K562 (cell line): ENCODE measurements at regions of chr12 and their contacts with region 1.

Region 1: GRCh38 chr12:56266693-56267442 is at the start of gene COQ10A:
- DNase-seq: peak; percentile 92 to 95 (median 93)
- ATAC-seq: peak; percentile 93
- H3K4me3 ChIP-seq: peak within 1 kb of the TSS; percentile 67
- H3K27ac ChIP-seq: peak within 1 kb of the TSS; percentile 77
- H3K4me1 ChIP-seq: peaks cover 11 to 19% of the 10 kb centered on the region in 2 experiments; a peak in 4 of 5 replicates
- H3K27me3 ChIP-seq: no peaks in the 10 kb centered on the region
- CTCF ChIP-seq: peak; percentile 64 to 79 (median 64)
- EP300 ChIP-seq: no peak
- POLR2A ChIP-seq: peak; percentile 90
- RAD21 ChIP-seq: peak; percentile 11 to 48; a peak in 3 of 4 replicates
- polyA plus RNA-seq, gene COQ10A: 3.1 to 5.7 TPM

Region 2: GRCh38 chr12:55830601-55831446 is 436.0 kb before region 1 on chr12:
- CTCF ChIA-PET with region 1: no interaction called
- POLR2A ChIA-PET with region 1: no interaction called
- in situ Hi-C with region 1: no loop called
- intact Hi-C with region 1: no loop called
- DNase-seq: peak; percentile 74 to 81 (median 78)
- ATAC-seq: peak; percentile 51
- H3K4me3 ChIP-seq: peak overlapping the region; percentile 78
- H3K27ac ChIP-seq: peak overlapping the region; percentile 83
- H3K4me1 ChIP-seq: peaks cover 26 to 42% of the 10 kb centered on the region in 2 experiments; a peak in 4 of 5 replicates
- H3K27me3 ChIP-seq: no peaks in the 10 kb centered on the region
- CTCF ChIP-seq: no peak
- EP300 ChIP-seq: no peak
- POLR2A ChIP-seq: 0 out of 2 replicates have a peak, but pooled peaks have one; percentile 28
- RAD21 ChIP-seq: no peak

Region 3: GRCh38 chr12:56224102-56224701 is 42.7 kb before region 1 on chr12 and contains the start of gene NABP2:
- CTCF ChIA-PET with region 1: no interaction called
- POLR2A ChIA-PET with region 1: interaction called, 7 read pairs
- in situ Hi-C with region 1: no loop called
- intact Hi-C with region 1: loop called (anchors 2 kb)
- DNase-seq: peak; percentile 98 to 100 (median 99)
- ATAC-seq: peak; percentile 91
- H3K4me3 ChIP-seq: peak within 1 kb of the TSS; percentile 95
- H3K27ac ChIP-seq: peak within 1 kb of the TSS; percentile 93
- H3K4me1 ChIP-seq: peaks cover 26 to 31% of the 10 kb centered on the region in 2 experiments; a peak in 4 of 5 replicates
- H3K27me3 ChIP-seq: no peaks in the 10 kb centered on the region
- CTCF ChIP-seq: peak; percentile 81 to 96 (median 81)
- EP300 ChIP-seq: 0 out of 2 replicates have a peak, but pooled peaks have one; percentile 29
- POLR2A ChIP-seq: 0 out of 2 replicates have a peak, but pooled peaks have one; percentile 51
- RAD21 ChIP-seq: peak; percentile 77
- polyA plus RNA-seq, gene NABP2: 11.3 to 28.0 TPM

Region 4: GRCh38 chr12:56278905-56279304 is 12.0 kb after region 1 on chr12:
- CTCF ChIA-PET with region 1: no interaction called
- POLR2A ChIA-PET with region 1: interaction called, 25 read pairs
- in situ Hi-C with region 1: no loop called
- intact Hi-C with region 1: no loop called
- DNase-seq: no peak
- ATAC-seq: no peak
- H3K4me3 ChIP-seq: no peak overlapping the region
- H3K27ac ChIP-seq: no peak overlapping the region
- H3K4me1 ChIP-seq: no peaks in the 10 kb centered on the region
- H3K27me3 ChIP-seq: no peaks in the 10 kb centered on the region
- CTCF ChIP-seq: no peak
- EP300 ChIP-seq: no peak
- POLR2A ChIP-seq: no peak
- RAD21 ChIP-seq: no peak

Region 5: DNA sequence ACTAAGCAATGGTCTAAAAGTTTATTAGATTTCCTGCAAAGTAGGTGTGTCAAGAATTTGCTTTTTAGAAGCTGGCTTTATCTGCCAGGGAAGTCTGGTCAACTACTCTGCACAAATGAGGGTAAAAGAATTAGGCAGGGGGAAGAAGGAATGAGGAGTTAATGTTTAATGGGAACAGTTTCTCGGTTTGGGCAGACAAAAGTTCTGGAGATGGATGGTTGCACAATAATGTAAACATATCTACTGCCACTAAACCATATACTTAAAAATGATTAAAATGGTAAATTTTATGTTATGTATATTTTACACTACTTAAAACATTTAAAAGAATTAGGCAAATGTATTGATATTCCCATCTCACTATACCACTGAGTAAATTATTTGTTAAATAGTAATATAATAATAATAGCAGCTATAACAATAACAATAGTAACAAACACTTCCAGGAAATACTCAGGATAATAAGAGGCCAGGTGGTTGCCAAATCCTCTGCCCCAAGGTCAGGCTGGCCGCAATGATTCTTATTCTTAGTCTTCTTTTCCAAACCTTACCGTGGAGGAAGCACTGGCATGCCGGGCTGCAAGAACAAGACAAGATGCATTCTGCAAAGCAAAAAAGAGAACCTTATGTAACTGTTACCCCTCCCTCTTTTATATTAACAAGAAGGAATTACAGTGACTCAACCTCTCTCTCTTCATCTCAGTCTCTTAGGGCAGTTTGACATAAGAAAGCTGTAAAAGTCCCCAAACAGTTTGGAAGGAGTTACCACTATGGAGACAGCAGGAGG is 19.4 kb after region 1 on chr12:
- CTCF ChIA-PET with region 1: no interaction called
- POLR2A ChIA-PET with region 1: interaction called, 13 read pairs
- in situ Hi-C with region 1: no loop called
- intact Hi-C with region 1: no loop called
- DNase-seq: no peak
- ATAC-seq: no peak
- H3K4me3 ChIP-seq: no peak overlapping the region
- H3K27ac ChIP-seq: no peak overlapping the region
- H3K4me1 ChIP-seq: no peaks in the 10 kb centered on the region
- H3K27me3 ChIP-seq: no peaks in the 10 kb centered on the region
- CTCF ChIP-seq: no peak
- EP300 ChIP-seq: no peak
- POLR2A ChIP-seq: no peak
- RAD21 ChIP-seq: no peak

Region 6: DNA sequence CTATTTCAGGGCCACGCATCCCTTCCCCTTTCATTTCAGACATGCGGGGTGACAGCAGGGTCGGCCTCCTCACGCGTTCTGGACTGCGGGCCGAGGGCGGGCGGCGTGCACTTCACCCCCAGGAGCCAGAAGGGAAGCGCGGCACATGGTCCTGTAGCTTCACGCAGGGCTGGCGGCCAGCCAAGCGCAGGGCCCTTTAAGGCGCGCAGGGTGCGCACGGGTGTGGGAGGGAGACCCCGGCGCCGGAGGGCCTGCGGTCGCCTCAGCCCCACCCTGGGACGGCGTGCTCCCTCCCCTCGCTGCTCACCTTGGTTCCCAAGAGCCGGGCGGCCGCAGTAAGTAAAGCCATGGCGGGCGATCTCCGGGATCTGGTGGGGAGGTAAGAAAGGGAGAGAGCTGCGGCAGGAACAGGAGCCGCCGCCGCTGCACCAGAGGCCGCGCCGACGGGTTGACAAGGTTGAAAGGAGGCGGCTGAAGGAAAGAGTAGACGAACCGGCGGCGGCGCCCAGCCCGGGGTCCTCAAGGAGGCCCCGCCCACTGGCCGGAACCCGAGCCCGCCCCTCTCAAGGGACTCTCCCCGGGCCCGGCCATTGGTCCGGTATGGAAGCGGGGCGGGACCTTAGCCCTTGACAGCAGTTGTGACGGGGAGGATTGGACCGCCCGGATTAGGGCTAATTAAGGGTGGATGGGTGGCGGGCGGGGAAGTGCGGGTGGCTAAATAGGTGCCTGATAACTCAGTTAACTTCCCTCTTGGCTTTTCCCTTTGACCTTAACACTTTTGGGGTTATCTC is 33.2 kb after region 1 on chr12 and contains the start of gene CS:
- CTCF ChIA-PET with region 1: no interaction called
- POLR2A ChIA-PET with region 1: interaction called, 3 read pairs
- in situ Hi-C with region 1: no loop called
- intact Hi-C with region 1: loop called (anchors 2 kb)
- DNase-seq: peak; percentile 96 to 99 (median 97)
- ATAC-seq: peak; percentile 94
- H3K4me3 ChIP-seq: peak within 1 kb of the TSS; percentile 64
- H3K27ac ChIP-seq: peak within 1 kb of the TSS; percentile 98
- H3K4me1 ChIP-seq: peaks cover 22 to 42% of the 10 kb centered on the region in 2 experiments
- H3K27me3 ChIP-seq: no peaks in the 10 kb centered on the region
- CTCF ChIP-seq: no peak
- EP300 ChIP-seq: peak; percentile 16; the same call in 1 of the 2 replicates
- POLR2A ChIP-seq: peak; percentile 95
- RAD21 ChIP-seq: no peak
- polyA plus RNA-seq, gene CS: 99.9 to 239 TPM